Activated T-helper 2 cell treated with anti-CD3 and anti-CD28 coated beads, Interferon-gamma antibody, Interleukin-2, Interleukin-4, amounts not matched to agents 10 μg/mL and 5 μg/mL and 100 μg/mL, durations not matched to agents 14 hours and 24 hours and 36 hours (primary cell): ENCODE measurements at regions of chr5 and their contacts with region 1.

Region 1: DNA sequence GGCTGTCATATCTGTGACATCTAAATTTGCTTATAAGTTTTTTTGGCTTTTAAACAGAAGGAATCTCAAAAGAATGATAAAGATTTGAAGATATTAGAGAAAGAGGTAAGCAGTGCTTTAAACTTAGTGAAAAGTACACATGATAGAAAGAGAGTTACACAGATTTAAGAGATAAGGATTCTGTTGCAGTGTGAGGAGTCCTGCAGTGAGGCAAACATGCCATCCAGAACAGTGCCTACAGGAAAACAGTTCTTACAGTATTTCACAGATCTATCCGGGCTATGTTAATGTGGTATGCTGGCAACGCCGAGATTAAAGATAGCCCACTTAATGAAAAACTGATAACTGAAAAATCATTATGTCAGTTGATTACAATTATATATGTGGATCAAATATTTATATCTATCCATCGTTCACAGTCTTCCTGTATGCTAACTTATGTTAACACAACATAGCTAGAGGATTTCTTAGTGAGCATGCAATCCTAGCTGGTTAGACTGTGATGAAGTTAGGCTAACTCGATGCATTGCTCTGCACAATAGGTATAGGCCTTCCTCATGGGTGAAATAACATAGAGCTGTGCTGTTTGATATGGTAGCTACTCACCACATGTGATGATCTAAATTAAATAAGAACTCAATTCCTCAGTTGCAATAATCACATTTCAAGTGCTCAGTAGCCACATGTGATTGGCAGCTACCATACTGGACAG is 7.4 kb downstream of the HMMR start:
- DNase-seq: no peak
- H3K4me3 Mint-ChIP-seq: peak overlapping the region; percentile 4
- H3K27ac Mint-ChIP-seq: peak overlapping the region; percentile 74
- H3K4me1 Mint-ChIP-seq: peaks cover 29% of the 10 kb centered on the region
- H3K27me3 Mint-ChIP-seq: no peaks in the 10 kb centered on the region

Region 2: GRCh38 chr5:163347671-163348070 is 120.1 kb before region 1 on chr5:
- intact Hi-C with region 1: no loop called
- DNase-seq: peak; percentile 34
- H3K4me3 Mint-ChIP-seq: no peak overlapping the region
- H3K27ac Mint-ChIP-seq: no peak overlapping the region
- H3K4me1 Mint-ChIP-seq: no peaks in the 10 kb centered on the region
- H3K27me3 Mint-ChIP-seq: peaks cover 6% of the 10 kb centered on the region

Region 3: GRCh38 chr5:163478126-163478981 is 10.6 kb after region 1 on chr5:
- intact Hi-C with region 1: loop called (anchors 2 kb)
- DNase-seq: no peak
- H3K4me3 Mint-ChIP-seq: no peak overlapping the region
- H3K27ac Mint-ChIP-seq: peak overlapping the region; percentile 28
- H3K4me1 Mint-ChIP-seq: peaks cover 15% of the 10 kb centered on the region
- H3K27me3 Mint-ChIP-seq: no peaks in the 10 kb centered on the region

Region 4: GRCh38 chr5:163565931-163566608 is 98.3 kb after region 1 on chr5:
- intact Hi-C with region 1: no loop called
- DNase-seq: no peak
- H3K4me3 Mint-ChIP-seq: peak overlapping the region; percentile 71
- H3K27ac Mint-ChIP-seq: no peak overlapping the region
- H3K4me1 Mint-ChIP-seq: peaks cover 18% of the 10 kb centered on the region
- H3K27me3 Mint-ChIP-seq: peaks cover 59% of the 10 kb centered on the region